B cell (primary cell): ENCODE measurements at regions of chr4 and their contacts with region 1.

Region 1: GRCh38 chr4:8176547-8177399 is 18.2 kb upstream of the ABLIM2 start:
- DNase-seq: peak; percentile 70
- ATAC-seq: peak; percentile 80
- H3K4me3 ChIP-seq: no peak overlapping the region
- H3K4me3 Mint-ChIP-seq: no peak overlapping the region
- H3K27ac ChIP-seq: no peak overlapping the region
- H3K27ac Mint-ChIP-seq: no peak overlapping the region
- H3K4me1 ChIP-seq: peaks cover 15 to 23% of the 10 kb centered on the region in 2 donors
- H3K4me1 Mint-ChIP-seq: peaks cover 13% of the 10 kb centered on the region
- H3K27me3 ChIP-seq: no peaks in the 10 kb centered on the region
- H3K27me3 Mint-ChIP-seq: no peaks in the 10 kb centered on the region
- CTCF ChIP-seq: peak; percentile 83

Region 2: DNA sequence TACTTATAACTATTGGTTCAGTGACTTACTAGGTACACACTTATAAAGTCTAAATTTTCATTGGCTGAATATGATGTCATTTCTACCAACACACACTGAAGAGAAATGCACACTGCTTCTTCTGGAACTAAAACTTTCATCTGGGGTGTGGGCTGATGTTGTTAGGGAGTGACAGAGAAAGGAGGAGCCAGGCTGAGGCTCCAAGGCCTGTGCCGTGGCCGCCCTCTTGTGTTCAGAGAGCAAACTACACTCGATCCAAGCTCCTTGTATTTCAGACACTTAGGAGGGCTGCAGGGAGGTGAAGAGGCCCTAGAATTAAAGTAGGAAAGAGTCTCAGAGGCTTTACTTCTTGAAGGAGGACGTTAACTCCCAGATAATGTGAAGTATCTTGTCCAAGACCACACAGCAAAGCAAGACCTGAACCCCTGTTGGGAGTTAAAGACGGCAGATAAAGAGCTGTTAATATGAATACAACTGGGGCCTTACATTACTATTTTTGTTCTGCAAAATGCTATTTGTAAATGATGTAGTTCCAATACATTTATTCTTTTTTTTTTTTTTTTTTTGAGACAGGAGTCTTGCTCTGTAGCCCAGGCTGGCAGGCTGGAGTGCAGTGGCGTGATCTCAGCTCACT is 374.6 kb before region 1 on chr4:
- CTCF ChIA-PET with region 1: interaction called, 11 read pairs
- POLR2A ChIA-PET with region 1: no interaction called
- intact Hi-C with region 1: no loop called
- DNase-seq: peak; percentile 69
- ATAC-seq: peak; percentile 87
- H3K4me3 ChIP-seq: no peak overlapping the region
- H3K4me3 Mint-ChIP-seq: no peak overlapping the region
- H3K27ac ChIP-seq: no peak overlapping the region
- H3K27ac Mint-ChIP-seq: no peak overlapping the region
- H3K4me1 ChIP-seq: no peaks in the 10 kb centered on the region
- H3K4me1 Mint-ChIP-seq: no peaks in the 10 kb centered on the region
- H3K27me3 ChIP-seq: peaks cover 0 to 5% (median 0%) of the 10 kb centered on the region in 4 experiments
- H3K27me3 Mint-ChIP-seq: peaks cover 20% of the 10 kb centered on the region
- CTCF ChIP-seq: peak; percentile 81

Region 3: DNA sequence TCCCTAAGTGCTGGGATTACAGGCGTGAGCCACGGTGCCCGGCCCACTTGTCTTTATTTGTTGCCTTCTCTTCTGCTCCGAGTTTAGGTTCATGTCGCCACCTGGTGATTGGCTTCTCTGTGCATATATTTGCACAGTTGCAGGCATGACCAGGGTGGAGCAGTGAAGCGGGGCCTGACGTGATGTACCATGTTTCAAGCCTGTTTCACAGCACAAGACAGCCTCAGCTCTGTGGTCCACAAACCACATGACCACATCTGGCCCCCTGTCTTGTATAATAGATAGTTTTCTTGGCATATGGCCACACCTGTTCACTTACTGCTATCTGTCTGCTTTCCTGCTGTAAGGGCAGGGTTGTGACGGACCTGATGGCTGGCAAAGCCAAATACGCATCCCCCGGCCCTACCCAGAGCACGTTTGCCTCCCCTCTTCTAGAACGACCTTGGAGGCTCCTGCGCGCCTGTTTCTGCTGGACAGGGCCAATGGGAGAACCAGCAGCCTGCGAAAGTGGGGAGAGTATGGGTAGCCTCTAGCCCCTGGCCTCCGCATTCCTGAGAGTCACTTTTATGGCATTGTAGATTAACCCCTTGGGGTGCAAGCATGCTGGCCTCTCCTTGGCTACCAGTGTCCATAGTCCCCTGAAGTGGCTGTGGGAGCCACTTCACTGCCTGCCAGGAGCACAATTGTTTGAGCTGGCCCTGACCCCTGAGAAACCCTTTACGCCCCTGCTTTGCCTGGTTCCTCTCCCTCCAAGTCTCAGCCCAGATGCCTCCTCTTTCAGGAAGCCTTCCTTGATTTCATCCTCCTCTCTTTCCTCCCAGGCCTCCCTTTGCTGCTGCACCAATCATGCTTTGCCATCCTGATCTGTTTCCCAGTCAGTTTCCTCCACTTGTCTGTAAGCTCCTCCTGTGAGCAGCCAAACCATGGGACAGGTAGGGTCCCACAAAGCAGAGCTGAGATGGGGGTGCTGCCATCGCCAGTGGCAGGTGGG is 16.3 kb after region 1 on chr4:
- CTCF ChIA-PET with region 1: interaction called, 127 read pairs
- POLR2A ChIA-PET with region 1: interaction called, 13 read pairs
- intact Hi-C with region 1: loop called (anchors 1 kb)
- DNase-seq: peak; percentile 92
- ATAC-seq: peak; percentile 98
- H3K4me3 ChIP-seq: no peak overlapping the region
- H3K4me3 Mint-ChIP-seq: peak overlapping the region; percentile 34
- H3K27ac ChIP-seq: peak overlapping the region; percentile 24 to 34
- H3K27ac Mint-ChIP-seq: peak overlapping the region; percentile 83
- H3K4me1 ChIP-seq: peaks cover 16 to 31% of the 10 kb centered on the region in 2 donors
- H3K4me1 Mint-ChIP-seq: peaks cover 35% of the 10 kb centered on the region
- H3K27me3 ChIP-seq: peaks cover 0 to 5% (median 1%) of the 10 kb centered on the region in 4 experiments
- H3K27me3 Mint-ChIP-seq: no peaks in the 10 kb centered on the region
- CTCF ChIP-seq: peak; percentile 68

Region 4: GRCh38 chr4:8205749-8206611 is 29.2 kb after region 1 on chr4:
- CTCF ChIA-PET with region 1: interaction called, 32 read pairs
- POLR2A ChIA-PET with region 1: interaction called, 7 read pairs
- intact Hi-C with region 1: no loop called
- DNase-seq: peak; percentile 67
- ATAC-seq: peak; percentile 46
- H3K4me3 ChIP-seq: no peak overlapping the region
- H3K4me3 Mint-ChIP-seq: peak overlapping the region; percentile 56
- H3K27ac ChIP-seq: peak overlapping the region; percentile 35 to 48
- H3K27ac Mint-ChIP-seq: peak overlapping the region; percentile 72
- H3K4me1 ChIP-seq: peaks cover 47 to 56% of the 10 kb centered on the region in 2 donors
- H3K4me1 Mint-ChIP-seq: peaks cover 62% of the 10 kb centered on the region
- H3K27me3 ChIP-seq: no peaks in the 10 kb centered on the region
- H3K27me3 Mint-ChIP-seq: no peaks in the 10 kb centered on the region
- CTCF ChIP-seq: no peak

Region 5: GRCh38 chr4:8241895-8242696 is 65.3 kb after region 1 on chr4:
- CTCF ChIA-PET with region 1: interaction called, 26 read pairs
- POLR2A ChIA-PET with region 1: no interaction called
- intact Hi-C with region 1: loop called (anchors 1 kb)
- DNase-seq: peak; percentile 79
- ATAC-seq: peak; percentile 62
- H3K4me3 ChIP-seq: no peak overlapping the region
- H3K4me3 Mint-ChIP-seq: no peak overlapping the region
- H3K27ac ChIP-seq: no peak overlapping the region
- H3K27ac Mint-ChIP-seq: no peak overlapping the region
- H3K4me1 ChIP-seq: peaks cover 0 to 27% of the 10 kb centered on the region in 2 donors
- H3K4me1 Mint-ChIP-seq: peaks cover 24% of the 10 kb centered on the region
- H3K27me3 ChIP-seq: no peaks in the 10 kb centered on the region
- H3K27me3 Mint-ChIP-seq: no peaks in the 10 kb centered on the region
- CTCF ChIP-seq: peak; percentile 95

Region 6: DNA sequence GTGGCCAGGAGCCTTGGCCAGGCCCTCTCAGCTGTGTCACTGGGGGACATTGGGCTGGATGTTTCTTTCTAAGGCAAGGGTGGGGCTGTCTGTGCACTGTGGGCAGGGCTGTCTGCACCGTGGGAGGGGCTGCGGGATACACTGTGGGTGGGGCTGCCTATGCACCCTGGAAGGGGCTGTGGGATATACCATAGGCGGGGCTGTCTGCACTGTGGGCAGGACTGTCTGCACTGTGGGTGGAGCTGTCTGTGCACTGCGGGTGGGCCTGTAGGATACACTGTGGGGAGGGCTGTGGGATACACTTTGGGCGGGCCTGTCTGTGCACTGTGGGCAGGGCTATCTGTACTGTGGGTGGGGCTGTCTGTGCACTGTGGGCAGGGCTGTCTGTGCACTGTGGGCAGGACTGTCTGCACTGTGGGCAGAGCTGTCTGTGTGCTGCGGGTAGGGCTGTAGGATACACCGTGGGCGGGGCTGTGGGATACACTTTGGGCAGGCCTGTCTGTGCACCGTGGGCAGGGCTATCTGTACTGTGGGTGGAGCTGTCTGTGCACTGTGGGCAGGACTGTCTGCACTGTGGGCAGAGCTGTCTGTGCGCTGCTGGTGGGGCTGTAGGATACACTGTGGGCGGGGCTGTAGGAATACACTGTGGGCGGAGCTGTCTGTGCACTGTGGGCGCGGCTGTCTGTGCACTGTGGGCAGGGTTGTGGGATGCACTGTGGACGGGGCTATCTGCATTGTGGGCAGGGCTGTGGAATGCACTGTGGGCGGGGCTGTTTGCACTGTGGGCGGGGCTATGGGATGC is 232.7 kb after region 1 on chr4:
- CTCF ChIA-PET with region 1: interaction called, 48 read pairs
- POLR2A ChIA-PET with region 1: no interaction called
- intact Hi-C with region 1: no loop called
- DNase-seq: no peak
- ATAC-seq: peak; percentile 36
- H3K4me3 ChIP-seq: no peak overlapping the region
- H3K4me3 Mint-ChIP-seq: no peak overlapping the region
- H3K27ac ChIP-seq: no peak overlapping the region
- H3K27ac Mint-ChIP-seq: no peak overlapping the region
- H3K4me1 ChIP-seq: peaks cover 0 to 6% of the 10 kb centered on the region in 2 donors
- H3K4me1 Mint-ChIP-seq: peaks cover 5% of the 10 kb centered on the region
- H3K27me3 ChIP-seq: no peaks in the 10 kb centered on the region
- H3K27me3 Mint-ChIP-seq: no peaks in the 10 kb centered on the region
- CTCF ChIP-seq: no peak